ENCODE measurements at regions of chr6 and their contacts with region 1.

Region 1: DNA sequence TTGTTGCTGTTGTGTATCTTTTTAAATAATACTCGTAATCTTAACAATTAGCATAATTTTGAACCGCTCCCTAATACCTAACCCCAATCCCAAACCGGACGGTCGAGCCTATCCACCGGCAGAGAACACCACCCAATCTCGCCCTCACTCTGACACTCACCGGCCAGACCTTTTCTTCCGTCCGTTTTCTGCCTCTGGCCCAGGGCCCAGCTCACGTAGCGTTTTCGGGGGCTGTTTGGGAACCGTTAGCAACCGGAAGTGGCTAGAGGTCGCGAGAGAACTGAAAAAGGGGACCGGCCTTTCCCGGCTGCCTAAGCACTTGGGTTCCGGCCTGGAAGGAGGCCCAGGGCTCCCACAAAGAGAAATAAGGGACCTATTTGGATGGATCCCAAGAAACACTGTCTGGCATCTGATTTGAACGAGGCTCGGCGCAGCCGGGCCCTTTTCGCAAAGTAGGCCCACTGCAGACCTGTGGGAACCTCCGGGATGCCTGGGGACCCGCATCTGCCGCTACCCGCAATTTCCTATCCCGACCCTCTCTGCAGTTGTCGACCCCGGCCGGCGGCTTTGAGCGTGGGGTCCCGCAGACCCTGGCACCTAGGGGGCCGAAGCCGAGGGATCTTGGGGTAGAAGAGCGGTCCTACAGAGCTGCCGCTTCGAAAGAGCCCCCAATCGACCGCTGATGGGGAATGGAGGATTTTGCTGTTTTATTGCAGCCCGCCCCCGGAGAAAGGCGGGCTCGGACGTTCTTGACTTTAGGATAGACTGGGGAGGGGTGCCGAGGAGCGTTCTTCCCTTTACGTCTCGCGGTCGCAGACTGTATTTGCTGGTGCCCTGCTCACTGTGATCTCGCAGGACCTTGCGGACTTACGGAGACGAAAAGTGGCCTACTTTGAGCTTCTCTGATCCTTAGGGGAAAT is 4.8 kb upstream of the ZKSCAN8 start:
- DNase-seq: peak; percentile 77 to 86
- H3K4me3 ChIP-seq: peak overlapping the region; percentile 81 to 88 (median 86)
- H3K27ac ChIP-seq: peak overlapping the region; percentile 92 to 95
- H3K4me1 ChIP-seq: peaks cover 0 to 4% of the 10 kb centered on the region in 2 donors
- H3K27me3 ChIP-seq: no peaks in the 10 kb centered on the region
- CTCF ChIP-seq: no peak
- POLR2A ChIP-seq: no peak

Region 2: GRCh38 chr6:27809939-27810767 is 326.7 kb before region 1 on chr6:
- intact Hi-C with region 1: loop called (anchors 5 kb)
- DNase-seq: peak; percentile 73 to 74
- H3K4me3 ChIP-seq: peak overlapping the region; percentile 51 to 79 (median 69)
- H3K27ac ChIP-seq: peak overlapping the region; percentile 94 to 95
- H3K4me1 ChIP-seq: no peaks in the 10 kb centered on the region
- H3K27me3 ChIP-seq: no peaks in the 10 kb centered on the region
- CTCF ChIP-seq: peak in 1 of 3 donors; percentile 11
- POLR2A ChIP-seq: peak; percentile 95

Region 3: DNA sequence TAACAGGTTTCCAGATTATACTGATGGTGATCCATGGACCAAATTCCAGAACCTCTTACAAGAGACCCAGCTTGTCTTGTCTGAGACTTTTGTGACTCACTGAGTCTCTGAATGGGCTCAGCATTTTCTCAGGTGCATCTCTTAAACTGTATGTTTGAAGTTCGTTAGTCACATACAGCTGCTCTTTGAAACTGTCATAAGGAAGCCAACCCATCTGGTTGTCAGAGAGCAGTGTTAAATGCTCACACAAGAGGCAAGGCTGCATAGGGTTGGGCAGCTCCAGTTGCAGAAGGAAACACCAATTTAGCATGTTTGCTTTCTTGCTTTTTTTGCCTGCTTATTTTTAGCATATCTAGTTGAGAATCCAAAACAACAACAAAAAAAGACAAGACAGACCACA is 739.9 kb after region 1 on chr6:
- intact Hi-C with region 1: loop called (anchors 5 kb)
- DNase-seq: no peak
- H3K4me3 ChIP-seq: no peak overlapping the region
- H3K27ac ChIP-seq: no peak overlapping the region
- H3K4me1 ChIP-seq: no peaks in the 10 kb centered on the region
- H3K27me3 ChIP-seq: peaks cover 0 to 23% of the 10 kb centered on the region in 2 donors
- CTCF ChIP-seq: no peak
- POLR2A ChIP-seq: no peak

Region 4: DNA sequence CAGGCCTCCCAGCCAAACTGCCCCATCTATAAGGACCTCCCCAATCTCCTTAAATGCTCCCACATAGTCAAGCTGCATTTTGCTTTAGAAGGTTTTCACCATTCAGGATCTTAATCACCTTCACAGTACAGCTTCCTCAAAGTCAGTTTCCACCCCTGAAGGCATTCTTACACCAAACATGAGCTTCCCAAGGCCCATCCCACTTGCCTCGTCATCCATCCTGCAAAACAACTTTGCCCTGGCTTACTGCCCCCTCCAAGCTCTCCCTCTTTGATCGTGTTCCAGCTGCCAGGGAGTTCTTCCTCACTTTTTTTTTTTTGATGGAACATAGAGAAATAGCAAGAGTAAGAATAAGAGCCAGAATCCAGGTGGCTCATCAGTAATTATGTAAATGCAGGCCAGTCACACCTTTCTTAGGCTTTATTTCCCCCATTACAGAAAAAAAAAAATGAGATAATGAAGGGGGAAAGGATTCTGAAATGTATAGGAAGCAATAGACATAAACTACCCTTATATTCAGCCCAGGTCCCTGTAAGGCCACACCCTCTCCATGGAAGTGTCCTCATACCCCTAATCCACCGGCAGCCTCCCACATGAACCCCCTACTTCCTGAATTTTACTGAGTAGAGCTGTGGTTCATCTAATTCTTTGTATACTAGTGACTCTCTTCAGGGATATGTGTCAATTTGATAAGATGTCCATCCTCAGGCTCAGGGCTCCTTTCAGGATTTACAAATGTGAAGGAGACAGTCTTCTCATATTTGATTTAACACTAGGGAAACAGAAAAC is 774.3 kb after region 1 on chr6:
- intact Hi-C with region 1: no loop called
- DNase-seq: peak; percentile 61 to 82
- H3K4me3 ChIP-seq: no peak overlapping the region
- H3K27ac ChIP-seq: peak overlapping the region; percentile 77 to 86
- H3K4me1 ChIP-seq: no peaks in the 10 kb centered on the region
- H3K27me3 ChIP-seq: no peaks in the 10 kb centered on the region
- CTCF ChIP-seq: no peak
- POLR2A ChIP-seq: no peak